ENCODE measurements at regions of chr14 and their contacts with region 1.

Region 1: DNA sequence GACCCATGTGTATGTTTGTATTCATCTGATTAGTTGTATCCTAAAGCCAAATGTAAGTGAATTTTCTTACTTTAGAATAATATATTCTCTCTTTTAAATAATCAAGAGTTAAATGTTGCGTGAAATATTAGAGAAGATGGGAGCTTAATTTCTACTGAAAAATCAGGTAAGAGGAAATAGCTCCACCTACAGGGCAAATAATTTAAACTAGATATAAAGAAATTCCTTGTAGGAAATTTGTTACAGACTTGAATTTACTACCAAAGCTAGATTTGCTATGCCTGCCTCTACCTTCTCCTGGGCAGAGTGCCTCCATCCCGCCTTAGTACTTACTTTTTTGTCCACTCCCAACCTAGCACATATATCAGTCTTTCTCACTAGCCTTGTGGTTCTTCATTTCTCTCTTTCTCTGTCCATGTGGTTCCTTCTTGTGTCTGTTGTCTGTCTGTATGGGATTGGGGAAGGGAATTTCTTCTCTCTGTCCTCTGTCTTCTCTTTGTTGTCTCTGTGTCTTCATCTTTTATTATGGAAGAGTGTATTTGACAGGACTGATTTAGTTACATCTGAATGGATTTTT is 44.7 kb downstream of the PALS1 start:
- DNase-seq: peak in 2 of 5 donors; percentile 17 to 26
- H3K4me3 ChIP-seq: no peak overlapping the region
- H3K4me3 Mint-ChIP-seq: no peak overlapping the region
- H3K27ac ChIP-seq: no peak overlapping the region
- H3K27ac Mint-ChIP-seq: no peak overlapping the region
- H3K4me1 ChIP-seq: no peaks in the 10 kb centered on the region
- H3K4me1 Mint-ChIP-seq: peaks cover 0 to 4% (median 2%) of the 10 kb centered on the region in 3 donors
- H3K27me3 ChIP-seq: no peaks in the 10 kb centered on the region
- H3K27me3 Mint-ChIP-seq: no peaks in the 10 kb centered on the region

Region 2: DNA sequence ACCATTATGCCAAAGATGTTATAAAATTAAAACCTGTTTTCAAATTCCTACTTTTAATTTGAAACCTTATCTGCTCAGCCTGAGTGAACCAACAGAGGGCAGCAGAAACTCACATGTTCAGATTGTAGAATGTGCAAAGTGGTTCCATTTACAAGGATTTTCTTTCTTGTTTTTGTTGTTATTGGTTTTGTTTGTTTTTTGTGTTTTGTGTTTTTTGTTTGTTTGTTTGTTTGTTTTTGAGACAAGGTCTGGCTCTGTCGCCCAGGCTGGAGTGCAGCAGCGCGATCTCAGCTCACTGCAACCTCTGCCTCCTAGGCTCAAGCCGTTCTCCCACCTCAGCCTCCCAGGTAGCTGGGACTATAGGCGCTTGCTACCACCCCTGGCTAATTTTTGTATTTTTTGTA is 119.5 kb before region 1 on chr14:
- CTCF ChIA-PET with region 1: interaction called, 22 read pairs
- POLR2A ChIA-PET with region 1: no interaction called
- DNase-seq: peak in 2 of 5 donors; percentile 1 to 19
- H3K4me3 ChIP-seq: no peak overlapping the region
- H3K4me3 Mint-ChIP-seq: no peak overlapping the region
- H3K27ac ChIP-seq: no peak overlapping the region
- H3K27ac Mint-ChIP-seq: no peak overlapping the region
- H3K4me1 ChIP-seq: no peaks in the 10 kb centered on the region
- H3K4me1 Mint-ChIP-seq: no peaks in the 10 kb centered on the region
- H3K27me3 ChIP-seq: no peaks in the 10 kb centered on the region
- H3K27me3 Mint-ChIP-seq: peaks cover 0 to 2% of the 10 kb centered on the region in 2 donors